B cell (primary cell): ENCODE measurements at regions of chr15 and their contacts with region 1.

Region 1: DNA sequence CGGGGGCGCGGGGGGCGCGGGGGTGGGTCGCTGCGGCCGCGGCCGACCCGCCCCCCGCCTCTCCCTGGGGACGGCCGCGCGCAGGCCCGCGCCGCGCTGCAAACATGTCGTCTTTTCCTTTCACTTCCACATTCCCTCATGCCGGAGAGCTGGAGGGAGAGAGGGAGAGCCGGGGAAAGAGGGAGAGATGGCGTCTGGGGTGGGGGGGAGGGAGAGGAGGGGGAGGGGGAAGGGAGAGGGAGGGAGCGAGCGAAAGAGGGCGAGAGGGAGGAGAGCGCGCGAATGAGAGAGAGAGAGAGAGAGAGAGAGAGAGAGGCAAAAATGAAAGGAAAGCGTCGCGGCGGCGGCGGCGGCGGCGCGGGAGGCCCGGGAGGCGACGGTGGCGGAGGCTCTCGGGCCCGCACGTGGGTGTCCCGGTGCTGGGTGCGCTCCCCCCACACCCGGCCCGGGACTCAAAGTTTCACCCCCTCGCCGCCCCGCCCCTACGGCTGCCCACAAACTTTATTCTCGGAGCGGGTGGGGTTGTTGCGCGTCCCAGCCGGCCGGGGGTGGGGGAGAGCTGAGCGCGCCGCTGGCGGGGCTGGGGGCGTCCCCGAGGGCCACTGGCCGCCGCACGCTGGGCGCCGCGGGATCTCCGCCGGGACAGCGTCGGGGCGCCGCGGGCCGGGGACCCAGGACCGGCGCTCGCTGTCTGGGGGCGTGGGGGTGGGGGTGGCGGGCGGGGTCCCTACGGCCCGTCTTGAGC is 731 bp downstream of the ZNF710 start:
- DNase-seq: peak; percentile 77
- ATAC-seq: peak; percentile 59
- H3K4me3 ChIP-seq: peak overlapping the region in 4 of 5 experiments; percentile 54 to 75 (median 64)
- H3K4me3 Mint-ChIP-seq: peak overlapping the region; percentile 94
- H3K27ac ChIP-seq: peak overlapping the region; percentile 43 to 68
- H3K27ac Mint-ChIP-seq: peak overlapping the region; percentile 96
- H3K4me1 ChIP-seq: peaks cover 11 to 35% of the 10 kb centered on the region in 2 donors
- H3K4me1 Mint-ChIP-seq: peaks cover 46% of the 10 kb centered on the region
- H3K27me3 ChIP-seq: no peaks in the 10 kb centered on the region
- H3K27me3 Mint-ChIP-seq: no peaks in the 10 kb centered on the region
- CTCF ChIP-seq: no peak

Region 2: GRCh38 chr15:88664151-88664778 is 1337.6 kb before region 1 on chr15:
- CTCF ChIA-PET with region 1: no interaction called
- POLR2A ChIA-PET with region 1: interaction called, 12 read pairs
- intact Hi-C with region 1: no loop called
- DNase-seq: peak; percentile 72
- ATAC-seq: peak; percentile 79
- H3K4me3 ChIP-seq: no peak overlapping the region
- H3K4me3 Mint-ChIP-seq: no peak overlapping the region
- H3K27ac ChIP-seq: no peak overlapping the region
- H3K27ac Mint-ChIP-seq: peak overlapping the region; percentile 78
- H3K4me1 ChIP-seq: peaks cover 13 to 14% of the 10 kb centered on the region in 2 donors
- H3K4me1 Mint-ChIP-seq: peaks cover 25% of the 10 kb centered on the region
- H3K27me3 ChIP-seq: no peaks in the 10 kb centered on the region
- H3K27me3 Mint-ChIP-seq: peaks cover 7% of the 10 kb centered on the region
- CTCF ChIP-seq: peak; percentile 68

Region 3: GRCh38 chr15:88876573-88876972 is 1125.3 kb before region 1 on chr15:
- CTCF ChIA-PET with region 1: no interaction called
- POLR2A ChIA-PET with region 1: interaction called, 13 read pairs
- intact Hi-C with region 1: no loop called
- DNase-seq: no peak
- ATAC-seq: no peak
- H3K4me3 ChIP-seq: no peak overlapping the region
- H3K4me3 Mint-ChIP-seq: no peak overlapping the region
- H3K27ac ChIP-seq: no peak overlapping the region
- H3K27ac Mint-ChIP-seq: no peak overlapping the region
- H3K4me1 ChIP-seq: no peaks in the 10 kb centered on the region
- H3K4me1 Mint-ChIP-seq: no peaks in the 10 kb centered on the region
- H3K27me3 ChIP-seq: peaks cover 0 to 3% (median 0%) of the 10 kb centered on the region in 4 experiments
- H3K27me3 Mint-ChIP-seq: no peaks in the 10 kb centered on the region
- CTCF ChIP-seq: no peak

Region 4: DNA sequence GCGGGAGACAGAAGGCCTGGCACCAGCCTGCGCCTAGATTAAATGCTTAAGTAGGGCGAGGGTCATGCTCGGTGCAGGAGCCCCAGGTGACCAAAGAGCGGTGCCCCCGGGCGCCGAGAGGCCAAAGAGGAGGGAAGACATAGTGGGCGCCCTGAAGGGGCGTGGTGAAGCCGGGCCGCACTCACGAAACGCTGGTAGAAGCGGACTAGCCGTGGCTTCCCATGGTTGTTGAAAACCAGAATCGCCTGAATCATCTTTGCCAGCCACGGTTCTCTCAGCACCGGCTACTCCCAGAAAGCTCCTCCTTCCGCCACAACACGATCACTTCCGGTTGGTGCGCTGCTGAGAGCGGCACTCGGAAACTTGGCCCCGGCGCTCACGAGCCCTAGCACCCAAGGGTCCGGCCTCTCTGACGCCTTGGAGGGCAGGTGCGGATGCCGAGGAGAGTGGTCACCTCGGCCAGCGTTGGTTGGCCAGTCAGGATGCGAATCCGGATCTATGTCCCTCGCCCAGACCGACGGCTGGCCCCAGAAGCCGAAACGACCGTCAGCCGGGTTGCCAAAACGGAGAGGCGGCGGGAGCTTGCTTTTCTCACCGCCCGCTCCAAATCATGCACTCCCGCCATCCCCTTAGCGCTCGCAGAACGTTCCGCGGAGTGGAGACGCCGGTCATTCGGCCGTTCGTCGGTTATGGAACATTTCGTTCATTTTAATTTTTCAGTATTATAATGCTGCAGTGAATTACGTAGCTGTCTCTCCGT is 108.0 kb before region 1 on chr15 and contains the start of gene AP3S2:
- CTCF ChIA-PET with region 1: interaction called, 3 read pairs
- POLR2A ChIA-PET with region 1: no interaction called
- intact Hi-C with region 1: loop called (anchors 2 kb)
- DNase-seq: peak; percentile 93
- ATAC-seq: peak; percentile 91
- H3K4me3 ChIP-seq: peak within 1 kb of the TSS; percentile 75 to 95 (median 89)
- H3K4me3 Mint-ChIP-seq: peak within 1 kb of the TSS; percentile 98
- H3K27ac ChIP-seq: peak within 1 kb of the TSS; percentile 62 to 80
- H3K27ac Mint-ChIP-seq: peak within 1 kb of the TSS; percentile 95
- H3K4me1 ChIP-seq: peaks cover 7 to 14% of the 10 kb centered on the region in 2 donors
- H3K4me1 Mint-ChIP-seq: peaks cover 33% of the 10 kb centered on the region
- H3K27me3 ChIP-seq: no peaks in the 10 kb centered on the region
- H3K27me3 Mint-ChIP-seq: no peaks in the 10 kb centered on the region
- CTCF ChIP-seq: no peak
- total RNA-seq, gene AP3S2: 32.3 and 43.1 TPM in 2 replicates

Region 5: GRCh38 chr15:90037961-90038631 is 36.2 kb after region 1 on chr15:
- CTCF ChIA-PET with region 1: no interaction called
- POLR2A ChIA-PET with region 1: interaction called, 3 read pairs
- intact Hi-C with region 1: loop called (anchors 5 kb)
- DNase-seq: peak; percentile 78
- ATAC-seq: peak; percentile 86
- H3K4me3 ChIP-seq: no peak overlapping the region
- H3K4me3 Mint-ChIP-seq: peak overlapping the region; percentile 61
- H3K27ac ChIP-seq: no peak overlapping the region
- H3K27ac Mint-ChIP-seq: peak overlapping the region; percentile 88
- H3K4me1 ChIP-seq: peaks cover 33 to 46% of the 10 kb centered on the region in 2 donors
- H3K4me1 Mint-ChIP-seq: peaks cover 74% of the 10 kb centered on the region
- H3K27me3 ChIP-seq: no peaks in the 10 kb centered on the region
- H3K27me3 Mint-ChIP-seq: no peaks in the 10 kb centered on the region
- CTCF ChIP-seq: no peak

Region 6: GRCh38 chr15:90059208-90059985 is 57.5 kb after region 1 on chr15:
- CTCF ChIA-PET with region 1: interaction called, 3 read pairs
- POLR2A ChIA-PET with region 1: interaction called, 11 read pairs
- intact Hi-C with region 1: loop called (anchors 1 kb)
- DNase-seq: peak; percentile 96
- ATAC-seq: peak; percentile 88
- H3K4me3 ChIP-seq: peak overlapping the region in 1 of 5 experiments; percentile 22
- H3K4me3 Mint-ChIP-seq: peak overlapping the region; percentile 80
- H3K27ac ChIP-seq: peak overlapping the region; percentile 82 to 88
- H3K27ac Mint-ChIP-seq: peak overlapping the region; percentile 98
- H3K4me1 ChIP-seq: peaks cover 54 to 93% of the 10 kb centered on the region in 2 donors
- H3K4me1 Mint-ChIP-seq: peaks cover 81% of the 10 kb centered on the region
- H3K27me3 ChIP-seq: no peaks in the 10 kb centered on the region
- H3K27me3 Mint-ChIP-seq: no peaks in the 10 kb centered on the region
- CTCF ChIP-seq: no peak

Region 7: GRCh38 chr15:90249203-90249863 is 247.5 kb after region 1 on chr15 and contains the start of gene TTLL13:
- CTCF ChIA-PET with region 1: no interaction called
- POLR2A ChIA-PET with region 1: interaction called, 12 read pairs
- intact Hi-C with region 1: no loop called
- DNase-seq: peak; percentile 71
- ATAC-seq: peak; percentile 79
- H3K4me3 ChIP-seq: peak within 1 kb of the TSS in 4 of 5 experiments; percentile 52 to 64 (median 56)
- H3K4me3 Mint-ChIP-seq: peak within 1 kb of the TSS; percentile 74
- H3K27ac ChIP-seq: peak within 1 kb of the TSS in 1 of 2 donors; percentile 39
- H3K27ac Mint-ChIP-seq: peak within 1 kb of the TSS; percentile 3
- H3K4me1 ChIP-seq: peaks cover 0 to 16% of the 10 kb centered on the region in 2 donors
- H3K4me1 Mint-ChIP-seq: peaks cover 16% of the 10 kb centered on the region
- H3K27me3 ChIP-seq: no peaks in the 10 kb centered on the region
- H3K27me3 Mint-ChIP-seq: no peaks in the 10 kb centered on the region
- CTCF ChIP-seq: no peak
- total RNA-seq, gene TTLL13: 0.22 and 0.42 TPM in 2 replicates

Region 8: GRCh38 chr15:90482124-90483011 is 480.5 kb after region 1 on chr15:
- CTCF ChIA-PET with region 1: no interaction called
- POLR2A ChIA-PET with region 1: no interaction called
- intact Hi-C with region 1: no loop called
- DNase-seq: peak; percentile 62
- ATAC-seq: no peak
- H3K4me3 ChIP-seq: no peak overlapping the region
- H3K4me3 Mint-ChIP-seq: no peak overlapping the region
- H3K27ac ChIP-seq: no peak overlapping the region
- H3K27ac Mint-ChIP-seq: peak overlapping the region; percentile 28
- H3K4me1 ChIP-seq: peaks cover 34 to 45% of the 10 kb centered on the region in 2 donors
- H3K4me1 Mint-ChIP-seq: peaks cover 35% of the 10 kb centered on the region
- H3K27me3 ChIP-seq: no peaks in the 10 kb centered on the region
- H3K27me3 Mint-ChIP-seq: no peaks in the 10 kb centered on the region
- CTCF ChIP-seq: peak; percentile 78